T-cell (primary cell): ENCODE measurements at regions of chr16 and their contacts with region 1.

Region 1: DNA sequence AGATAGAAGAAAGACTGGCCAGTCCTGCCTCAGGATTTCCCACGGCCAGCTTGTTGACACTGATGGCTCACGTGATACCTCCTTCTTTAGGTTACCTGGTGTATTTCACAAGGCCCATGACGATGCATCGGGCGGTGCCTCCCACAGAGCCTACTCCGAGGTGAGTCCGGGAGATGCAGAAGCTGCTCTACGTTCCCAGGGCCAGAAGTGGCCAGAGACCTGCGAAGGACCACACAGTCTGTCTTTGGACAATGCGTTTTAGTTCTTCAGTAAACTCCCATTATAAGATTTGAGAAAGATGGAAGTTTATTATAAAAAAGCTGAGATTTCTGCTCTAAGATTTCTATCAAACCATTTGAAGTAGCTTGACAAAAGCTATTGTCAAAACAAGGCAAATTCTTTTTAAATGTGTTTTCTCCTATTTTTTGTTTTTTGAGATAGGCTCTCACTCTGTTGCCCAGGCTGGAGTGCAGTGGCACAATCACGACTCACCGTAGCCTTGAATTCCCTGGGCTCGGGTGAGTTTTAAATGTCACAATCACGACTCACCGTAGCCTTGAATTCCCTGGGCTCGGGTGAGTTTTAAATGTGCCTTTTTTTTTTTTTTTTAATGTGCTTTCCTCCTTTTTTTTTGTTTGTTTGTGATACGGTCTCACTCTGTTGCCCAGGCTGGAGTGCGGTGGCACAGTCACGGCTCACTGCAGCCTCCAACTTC is 69.3 kb upstream of the FA2H start:
- DNase-seq: no peak
- ATAC-seq: no peak
- H3K4me3 ChIP-seq: no peak overlapping the region
- H3K4me3 Mint-ChIP-seq: no peak overlapping the region
- H3K27ac ChIP-seq: no peak overlapping the region
- H3K27ac Mint-ChIP-seq: no peak overlapping the region
- H3K4me1 ChIP-seq: no peaks in the 10 kb centered on the region
- H3K4me1 Mint-ChIP-seq: peaks cover 0 to 3% (median 2%) of the 10 kb centered on the region in 3 donors
- H3K27me3 ChIP-seq: no peaks in the 10 kb centered on the region
- H3K27me3 Mint-ChIP-seq: no peaks in the 10 kb centered on the region

Region 2: DNA sequence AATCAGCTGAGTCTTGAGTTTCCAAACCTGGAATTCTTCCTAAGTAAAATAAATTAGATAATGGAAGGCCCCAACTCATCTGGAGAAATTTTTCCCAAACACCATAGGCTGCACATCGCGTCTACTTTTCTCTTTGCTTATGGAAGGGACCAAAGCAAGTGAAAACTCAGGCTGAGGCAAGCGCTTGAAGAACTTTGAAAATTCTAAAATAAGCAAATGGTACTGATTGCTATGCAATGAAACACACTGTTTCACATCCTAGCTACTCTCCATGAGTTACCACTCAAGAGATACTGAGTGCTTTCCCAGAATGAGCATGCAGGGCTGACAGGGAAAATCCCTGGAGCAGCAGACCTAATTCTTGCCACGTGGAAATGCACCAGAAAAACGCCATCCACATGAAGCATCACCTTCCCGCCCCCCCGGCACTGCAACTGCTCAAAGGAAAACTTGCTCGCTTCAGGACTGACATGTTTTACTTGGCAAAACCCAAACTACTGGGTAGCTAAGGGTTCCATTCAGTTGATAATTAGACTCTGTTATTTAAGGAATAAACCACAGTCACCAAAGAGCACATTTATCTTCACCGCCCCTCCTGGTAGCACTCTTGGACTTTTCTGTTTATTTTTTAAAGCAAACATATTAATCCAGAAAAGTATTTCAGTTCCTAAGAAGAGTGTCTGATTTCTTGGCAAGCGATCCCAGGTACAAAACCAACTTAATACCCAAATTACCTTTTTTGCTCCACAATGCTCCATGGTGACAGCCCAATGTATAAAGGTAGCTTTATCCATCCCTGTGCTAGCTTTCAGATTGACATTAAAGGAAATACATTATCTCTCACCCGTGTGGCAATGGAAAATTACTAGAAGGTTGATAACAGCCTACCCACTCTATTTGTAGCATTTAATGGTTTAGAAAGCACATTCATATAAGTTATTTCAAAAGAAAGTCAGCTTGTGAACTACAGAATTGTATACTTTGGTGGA is 78.6 kb after region 1 on chr16:
- CTCF ChIA-PET with region 1: no interaction called
- POLR2A ChIA-PET with region 1: interaction called in 1 of 2 experiments, 14 read pairs
- DNase-seq: no peak
- ATAC-seq: no peak
- H3K4me3 ChIP-seq: no peak overlapping the region
- H3K4me3 Mint-ChIP-seq: no peak overlapping the region
- H3K27ac ChIP-seq: no peak overlapping the region
- H3K27ac Mint-ChIP-seq: no peak overlapping the region
- H3K4me1 ChIP-seq: no peaks in the 10 kb centered on the region
- H3K4me1 Mint-ChIP-seq: no peaks in the 10 kb centered on the region
- H3K27me3 ChIP-seq: no peaks in the 10 kb centered on the region
- H3K27me3 Mint-ChIP-seq: no peaks in the 10 kb centered on the region